ENCODE measurements at regions of chr6 and their contacts with region 1.

Region 1: DNA sequence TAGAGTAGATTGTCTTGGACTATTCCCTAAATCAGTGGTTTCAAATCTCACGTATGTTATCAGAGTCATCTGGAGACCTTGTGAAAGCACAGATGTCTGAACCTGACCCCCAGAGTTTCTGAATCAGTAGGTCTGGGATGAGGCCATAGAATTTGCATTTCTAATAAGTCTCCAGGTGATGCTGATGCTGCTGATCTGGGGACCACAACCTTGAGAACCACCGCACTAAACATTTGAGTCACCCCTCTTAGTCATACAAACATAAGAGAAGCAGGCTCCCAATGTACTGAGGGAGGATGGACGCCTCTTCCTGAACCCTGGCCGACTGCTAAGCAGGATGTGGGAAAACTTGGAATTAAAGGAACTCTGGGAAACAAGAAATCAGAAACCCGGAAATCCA is 187.8 kb upstream of the PRDM1 start:
- DNase-seq: peak; percentile 62
- H3K4me3 Mint-ChIP-seq: no peak overlapping the region
- H3K27ac Mint-ChIP-seq: no peak overlapping the region
- H3K4me1 Mint-ChIP-seq: peaks cover 27% of the 10 kb centered on the region
- H3K27me3 Mint-ChIP-seq: no peaks in the 10 kb centered on the region

Region 2: GRCh38 chr6:105810105-105810921 is 88.0 kb before region 1 on chr6:
- CTCF ChIA-PET with region 1: no interaction called
- POLR2A ChIA-PET with region 1: interaction called, 14 read pairs
- DNase-seq: peak; percentile 83
- H3K4me3 Mint-ChIP-seq: peak overlapping the region; percentile 33
- H3K27ac Mint-ChIP-seq: peak overlapping the region; percentile 92
- H3K4me1 Mint-ChIP-seq: peaks cover 78% of the 10 kb centered on the region
- H3K27me3 Mint-ChIP-seq: no peaks in the 10 kb centered on the region

Region 3: DNA sequence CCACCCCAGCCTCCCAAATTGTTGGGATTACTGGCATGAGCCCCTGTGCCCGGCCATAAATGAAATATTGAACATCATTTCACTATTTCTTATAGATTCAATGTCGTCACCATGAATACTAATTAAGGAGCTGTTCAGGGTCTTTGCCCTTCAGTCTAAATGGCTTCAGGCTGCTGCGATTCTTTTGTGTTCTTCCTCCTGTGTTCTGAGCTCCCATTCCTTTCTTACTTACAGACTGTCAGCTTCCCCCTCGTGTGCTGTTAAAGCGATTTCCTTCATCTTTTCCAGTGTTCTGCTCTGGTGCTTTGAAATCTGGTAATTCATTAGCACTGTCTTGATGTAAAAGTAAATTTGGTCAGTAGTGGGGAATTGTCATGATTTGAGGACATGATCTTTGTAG is 124.5 kb after region 1 on chr6:
- CTCF ChIA-PET with region 1: no interaction called
- POLR2A ChIA-PET with region 1: no interaction called
- DNase-seq: no peak
- H3K4me3 Mint-ChIP-seq: no peak overlapping the region
- H3K27ac Mint-ChIP-seq: no peak overlapping the region
- H3K4me1 Mint-ChIP-seq: peaks cover 6% of the 10 kb centered on the region
- H3K27me3 Mint-ChIP-seq: no peaks in the 10 kb centered on the region